Dendritic cell treated with granulocyte-macrophage colony-stimulating factor and Interleukin-4, amounts not matched to agents 40 ng/mL and 50 ng/mL, for 4 days (primary cell): ENCODE measurements at regions of chr1 and their contacts with region 1.

Region 1: DNA sequence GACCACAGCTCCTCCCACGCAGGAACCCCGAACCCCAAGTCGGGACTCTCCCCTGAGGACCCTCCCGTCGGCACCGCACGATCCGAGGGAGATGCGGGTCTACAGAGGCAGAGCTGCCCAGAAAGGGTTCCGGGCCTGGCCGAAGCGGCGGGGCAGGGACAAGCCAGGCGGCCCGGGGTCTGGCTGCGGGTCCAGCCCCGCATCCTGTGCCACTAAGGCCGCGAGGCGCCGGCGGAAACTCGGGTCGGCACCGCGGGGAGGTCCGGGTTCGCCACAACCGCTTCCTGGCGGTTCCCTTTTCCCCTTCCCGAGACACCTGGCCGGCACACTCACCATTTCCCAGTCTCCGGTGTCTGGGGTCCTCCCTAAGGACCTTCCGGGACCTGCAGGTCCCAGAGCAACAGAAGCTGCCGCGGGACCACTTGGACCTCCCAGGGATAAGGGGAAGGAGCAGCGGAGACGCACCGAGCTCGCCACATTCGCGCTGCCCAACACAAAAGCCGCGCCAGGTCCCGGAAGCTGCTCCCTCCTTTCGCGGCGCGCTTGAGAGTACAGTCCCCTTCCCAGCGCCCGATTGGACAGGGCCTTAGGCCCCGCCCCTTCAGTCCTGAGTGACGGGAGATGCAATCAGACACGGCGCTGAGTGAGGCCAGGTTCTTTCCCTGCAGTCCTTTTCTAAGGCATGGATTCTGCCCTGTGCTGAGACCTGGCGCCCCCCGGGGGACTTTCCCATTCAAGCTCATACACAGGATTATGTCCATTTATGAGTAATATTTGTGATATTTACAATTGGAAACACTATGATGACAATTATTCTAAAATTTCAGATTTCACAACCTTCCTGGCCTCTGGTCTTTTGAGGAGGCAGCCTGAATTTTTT is at the start of gene ZNF670:
- H3K4me3 Mint-ChIP-seq: peak within 1 kb of the TSS; percentile 97
- H3K27ac Mint-ChIP-seq: peak within 1 kb of the TSS; percentile 90
- H3K4me1 Mint-ChIP-seq: peaks cover 17% of the 10 kb centered on the region
- H3K27me3 Mint-ChIP-seq: peaks cover 6% of the 10 kb centered on the region

Region 2: GRCh38 chr1:246923482-246923881 is 155.0 kb before region 1 on chr1:
- intact Hi-C with region 1: loop called (anchors 10 kb)
- H3K4me3 Mint-ChIP-seq: no peak overlapping the region
- H3K27ac Mint-ChIP-seq: peak overlapping the region; percentile 25
- H3K4me1 Mint-ChIP-seq: peaks cover 24% of the 10 kb centered on the region
- H3K27me3 Mint-ChIP-seq: no peaks in the 10 kb centered on the region